PC-9 (cell line): ENCODE measurements at regions of chr14 and their contacts with region 1.

Region 1: GRCh38 chr14:103072928-103073875 is 10.8 kb upstream of the LBHD2 start:
- DNase-seq: no peak
- H3K4me3 ChIP-seq: no peak overlapping the region
- H3K27ac ChIP-seq: no peak overlapping the region
- H3K4me1 ChIP-seq: peaks cover 62% of the 10 kb centered on the region
- H3K27me3 ChIP-seq: no peaks in the 10 kb centered on the region
- CTCF ChIP-seq: no peak

Region 2: GRCh38 chr14:102973706-102974285 is 99.4 kb before region 1 on chr14:
- CTCF ChIA-PET with region 1: interaction called, 8 read pairs
- POLR2A ChIA-PET with region 1: interaction called, 3 read pairs
- intact Hi-C with region 1: loop called (anchors 2 kb)
- DNase-seq: no peak
- H3K4me3 ChIP-seq: no peak overlapping the region
- H3K27ac ChIP-seq: no peak overlapping the region
- H3K4me1 ChIP-seq: no peaks in the 10 kb centered on the region
- H3K27me3 ChIP-seq: no peaks in the 10 kb centered on the region
- CTCF ChIP-seq: no peak

Region 3: DNA sequence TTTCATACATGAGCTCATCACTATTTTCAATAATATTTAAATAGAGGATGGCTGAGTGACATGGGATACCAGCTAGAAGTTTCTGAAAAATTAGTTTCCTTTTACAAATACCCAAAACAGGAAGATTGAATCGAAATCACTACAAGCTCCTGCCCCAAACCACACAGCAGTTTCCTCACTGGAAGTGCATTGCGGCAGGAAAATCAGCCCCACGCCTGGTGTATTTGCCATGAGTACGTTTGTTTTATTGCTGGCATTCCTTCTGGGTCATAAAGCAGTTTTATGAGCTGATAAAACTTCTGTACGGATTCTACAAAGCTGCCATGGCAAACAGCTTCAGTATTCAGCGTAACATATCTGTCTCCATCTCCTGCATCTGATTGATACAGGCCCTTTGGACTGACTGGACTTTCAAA is 39.5 kb before region 1 on chr14:
- CTCF ChIA-PET with region 1: no interaction called
- POLR2A ChIA-PET with region 1: no interaction called
- intact Hi-C with region 1: no loop called
- DNase-seq: peak in 1 of 2 experiments; percentile 58
- H3K4me3 ChIP-seq: no peak overlapping the region
- H3K27ac ChIP-seq: peak overlapping the region; percentile 22
- H3K4me1 ChIP-seq: peaks cover 19% of the 10 kb centered on the region
- H3K27me3 ChIP-seq: no peaks in the 10 kb centered on the region
- CTCF ChIP-seq: no peak

Region 4: DNA sequence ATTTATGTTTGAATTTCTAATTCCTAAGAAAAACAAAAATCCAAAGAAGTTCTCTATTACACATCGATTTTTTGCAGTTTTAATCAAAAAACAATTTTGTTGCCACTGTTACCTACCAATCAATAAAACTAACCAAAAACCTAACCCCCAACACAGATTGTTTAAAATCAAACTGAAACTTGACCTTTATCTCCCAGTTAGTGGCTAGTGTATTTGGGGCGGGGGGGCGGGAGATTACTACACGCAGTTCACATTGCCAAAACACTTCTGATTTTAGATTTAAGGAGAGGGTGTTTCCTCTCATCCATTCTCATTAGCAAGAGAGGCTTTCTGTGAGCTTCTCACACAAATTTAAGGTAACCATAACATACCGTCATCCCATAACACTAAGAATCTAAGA is 22.3 kb before region 1 on chr14:
- CTCF ChIA-PET with region 1: interaction called, 8 read pairs
- POLR2A ChIA-PET with region 1: interaction called, 37 read pairs
- intact Hi-C with region 1: no loop called
- DNase-seq: no peak
- H3K4me3 ChIP-seq: no peak overlapping the region
- H3K27ac ChIP-seq: peak overlapping the region; percentile 24; the same call in 1 of the 2 replicates
- H3K4me1 ChIP-seq: peaks cover 24% of the 10 kb centered on the region
- H3K27me3 ChIP-seq: no peaks in the 10 kb centered on the region
- CTCF ChIP-seq: no peak

Region 5: DNA sequence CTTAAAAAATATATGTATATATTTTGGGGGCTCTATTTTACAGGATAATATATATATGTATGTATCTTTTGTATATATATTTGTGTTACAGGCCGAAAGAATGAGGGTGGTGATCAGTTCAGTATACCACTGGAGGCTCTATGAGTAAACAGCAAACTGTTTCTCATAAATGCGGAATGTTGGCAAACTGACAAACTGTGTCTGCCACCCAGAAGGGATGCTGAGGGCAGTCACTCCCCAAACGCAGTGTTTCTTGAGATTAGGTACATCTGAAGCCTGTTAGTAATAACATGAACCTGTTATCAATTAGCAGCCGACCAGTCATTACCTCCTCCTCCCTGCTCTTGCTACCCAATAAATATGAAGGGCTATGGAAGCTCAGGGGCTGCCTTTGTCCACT is 70.9 kb after region 1 on chr14:
- CTCF ChIA-PET with region 1: no interaction called
- POLR2A ChIA-PET with region 1: no interaction called
- intact Hi-C with region 1: no loop called
- DNase-seq: peak; percentile 77 to 99
- H3K4me3 ChIP-seq: peak overlapping the region; percentile 30; the same call in 1 of the 2 replicates
- H3K27ac ChIP-seq: peak overlapping the region; percentile 91
- H3K4me1 ChIP-seq: peaks cover 50% of the 10 kb centered on the region
- H3K27me3 ChIP-seq: no peaks in the 10 kb centered on the region
- CTCF ChIP-seq: no peak